A549 (cell line): ENCODE measurements at regions of chr17 and their contacts with region 1.

Region 1: DNA sequence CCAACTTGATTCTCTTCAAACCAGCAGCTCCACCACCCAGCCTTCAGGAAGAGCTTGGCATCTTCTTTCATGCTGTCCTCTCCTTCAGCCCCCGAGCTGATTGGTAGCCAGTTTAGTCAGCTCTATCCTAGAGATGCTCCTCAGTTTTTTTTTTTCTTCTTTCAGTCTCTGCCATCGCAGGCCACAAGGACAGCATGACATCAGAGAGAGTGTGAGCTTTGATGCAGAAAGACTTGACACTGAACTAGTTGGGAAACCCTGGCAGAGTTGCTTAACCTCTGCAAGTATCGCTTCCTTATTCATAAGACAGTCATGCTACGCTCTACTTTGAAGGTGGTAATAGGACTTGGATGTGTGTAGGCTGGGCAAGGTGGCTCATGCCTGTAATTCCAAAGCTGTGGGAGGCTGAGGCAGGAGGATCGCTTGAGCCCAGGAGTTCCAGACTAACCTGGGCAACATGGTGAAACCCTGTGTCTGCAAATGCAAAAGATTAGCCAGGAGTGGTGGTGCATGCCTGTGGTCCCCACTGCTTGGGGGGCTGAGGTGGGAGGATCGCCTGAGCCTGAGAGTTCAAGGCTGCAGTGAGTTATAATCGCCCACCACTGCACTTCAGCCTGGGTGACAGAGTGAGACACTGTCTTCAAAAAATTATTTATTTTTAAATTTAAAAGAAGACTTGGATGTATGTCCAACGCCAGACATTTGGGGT is 2.6 kb downstream of the CD300LB start:
- DNase-seq: no peak
- ATAC-seq: no peak
- H3K4me3 ChIP-seq: no peak overlapping the region
- H3K27ac ChIP-seq: no peak overlapping the region
- H3K4me1 ChIP-seq: no peaks in the 10 kb centered on the region
- CTCF ChIP-seq: no peak
- EP300 ChIP-seq: no peak
- POLR2A ChIP-seq: no peak
- RAD21 ChIP-seq: no peak

Region 2: DNA sequence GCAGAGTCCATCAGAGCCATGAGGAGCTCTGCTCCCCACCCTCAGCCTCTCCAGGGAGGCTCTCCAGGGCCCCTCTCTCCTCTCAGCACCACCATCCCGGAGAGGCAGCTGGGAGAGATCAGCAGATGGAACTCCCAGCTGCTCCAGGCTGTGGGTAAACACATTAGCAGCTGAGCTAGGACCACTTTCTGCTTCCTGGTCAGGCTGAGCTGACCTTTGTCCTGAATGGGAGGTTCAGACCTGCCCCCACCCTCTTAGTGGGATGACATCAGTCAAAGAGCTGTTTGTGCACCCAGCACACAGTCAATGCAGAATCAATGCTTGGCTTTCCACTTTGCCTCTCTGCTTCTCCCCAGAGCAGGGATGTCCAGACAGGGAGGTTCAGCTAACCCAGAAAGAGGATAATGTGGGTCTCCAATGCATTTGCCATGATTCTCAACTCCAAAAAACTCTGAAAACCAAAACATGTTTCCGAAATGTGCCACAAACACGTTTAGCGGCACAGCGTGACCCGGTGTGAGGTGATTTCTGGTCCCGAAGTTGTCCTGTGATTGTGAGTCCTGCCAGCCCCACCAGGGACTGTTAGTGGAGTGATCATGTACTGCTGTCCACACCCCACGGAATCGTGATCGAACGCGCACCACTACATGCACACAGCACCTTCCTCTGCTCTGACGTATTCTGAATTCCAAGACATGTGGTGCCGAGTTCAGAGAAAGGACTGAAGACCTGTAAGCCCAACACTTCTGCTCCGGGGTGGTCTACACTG is 154.6 kb before region 1 on chr17:
- CTCF ChIA-PET with region 1: interaction called, 59 read pairs
- POLR2A ChIA-PET with region 1: no interaction called
- DNase-seq: peak in 1 of 2 experiments; percentile 45
- ATAC-seq: peak; percentile 27 to 41; a peak in 4 of 6 replicates
- H3K4me3 ChIP-seq: no peak overlapping the region
- H3K27ac ChIP-seq: no peak overlapping the region
- H3K4me1 ChIP-seq: peaks cover 8% of the 10 kb centered on the region; the same call in 2 of the 3 replicates
- CTCF ChIP-seq: no peak
- EP300 ChIP-seq: no peak
- POLR2A ChIP-seq: no peak
- RAD21 ChIP-seq: no peak

Region 3: DNA sequence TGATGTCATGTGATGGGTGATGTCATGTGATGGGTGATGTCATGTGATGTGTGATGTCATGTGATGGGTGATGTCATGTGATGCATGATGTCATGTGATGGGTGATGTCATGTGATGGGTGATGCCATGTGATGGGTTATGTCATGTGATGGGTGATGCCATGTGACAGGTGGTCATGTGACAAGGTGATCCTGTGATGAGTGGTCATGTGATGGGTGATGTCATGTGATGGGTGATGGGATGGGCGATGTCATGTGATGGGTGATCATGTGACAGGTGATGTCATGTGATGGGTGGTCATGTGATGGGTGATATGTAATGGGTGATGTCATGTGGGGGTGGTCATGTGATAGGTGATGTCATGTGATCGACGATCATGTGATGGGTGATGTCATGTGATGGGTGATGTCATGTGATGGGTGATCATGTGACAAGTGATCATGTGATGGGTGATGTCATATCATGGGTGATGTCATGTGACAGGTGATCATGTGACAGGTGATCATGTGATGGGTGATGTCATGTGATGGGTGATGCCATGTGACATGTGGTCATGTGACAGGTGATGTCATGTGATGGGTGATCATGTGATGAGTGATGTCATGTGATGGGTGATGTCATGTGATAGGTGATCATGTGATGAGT is 14.5 kb before region 1 on chr17:
- CTCF ChIA-PET with region 1: interaction called, 12 read pairs
- POLR2A ChIA-PET with region 1: no interaction called
- DNase-seq: peak; percentile 55 to 87
- ATAC-seq: peak; percentile 24 to 44; a peak in 2 of 6 replicates
- H3K4me3 ChIP-seq: no peak overlapping the region
- H3K27ac ChIP-seq: no peak overlapping the region
- H3K4me1 ChIP-seq: no peaks in the 10 kb centered on the region
- CTCF ChIP-seq: no peak
- EP300 ChIP-seq: no peak
- POLR2A ChIP-seq: no peak
- RAD21 ChIP-seq: no peak

Region 4: DNA sequence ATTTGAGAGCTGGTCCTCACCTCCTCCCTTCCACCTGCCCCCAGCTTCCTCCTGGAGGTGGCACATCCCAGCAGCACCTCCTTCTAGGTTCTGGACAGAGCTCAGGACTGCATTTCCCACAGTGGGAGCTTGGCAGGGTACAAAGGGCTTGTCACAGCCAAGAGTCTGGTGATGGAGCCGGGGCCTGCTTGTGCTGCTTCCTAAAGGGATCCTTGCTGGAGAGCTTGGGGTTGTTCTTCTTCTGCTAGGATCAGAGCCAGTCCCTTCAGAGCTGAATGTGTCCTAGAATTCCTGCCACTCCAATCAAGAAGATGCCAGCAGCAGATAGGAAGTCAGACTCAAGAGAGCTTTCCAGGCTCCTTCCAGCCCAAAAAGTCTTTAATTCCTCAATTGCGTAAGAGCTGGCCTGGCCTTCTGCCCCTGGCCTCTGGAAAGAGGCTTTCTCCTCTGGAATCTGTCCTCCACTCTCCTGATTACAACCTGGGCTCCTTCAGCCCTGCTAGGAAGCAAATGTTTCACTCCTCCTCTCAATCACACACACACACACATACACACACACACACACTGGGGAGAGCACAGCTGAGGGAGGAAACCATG is 90.5 kb after region 1 on chr17:
- CTCF ChIA-PET with region 1: no interaction called
- POLR2A ChIA-PET with region 1: no interaction called
- DNase-seq: no peak
- ATAC-seq: no peak
- H3K4me3 ChIP-seq: no peak overlapping the region
- H3K27ac ChIP-seq: no peak overlapping the region
- H3K4me1 ChIP-seq: no peaks in the 10 kb centered on the region
- CTCF ChIP-seq: no peak
- EP300 ChIP-seq: no peak
- POLR2A ChIP-seq: no peak
- RAD21 ChIP-seq: no peak